ENCODE measurements at regions of chr14 and their contacts with region 1.

Region 1: GRCh38 chr14:100375963-100376735 is 53.0 kb downstream of the SLC25A47 start:
- DNase-seq: peak; percentile 97
- H3K4me3 ChIP-seq: peak within 1 kb of the TSS; percentile 63 to 77 (median 68)
- H3K27ac ChIP-seq: peak within 1 kb of the TSS; percentile 86 to 94 (median 90)
- H3K4me1 ChIP-seq: peaks cover 0 to 34% (median 25%) of the 10 kb centered on the region in 4 donors
- H3K27me3 ChIP-seq: no peaks in the 10 kb centered on the region
- CTCF ChIP-seq: no peak
- EP300 ChIP-seq: no peak
- POLR2A ChIP-seq: peak; percentile 52 to 60

Region 2: DNA sequence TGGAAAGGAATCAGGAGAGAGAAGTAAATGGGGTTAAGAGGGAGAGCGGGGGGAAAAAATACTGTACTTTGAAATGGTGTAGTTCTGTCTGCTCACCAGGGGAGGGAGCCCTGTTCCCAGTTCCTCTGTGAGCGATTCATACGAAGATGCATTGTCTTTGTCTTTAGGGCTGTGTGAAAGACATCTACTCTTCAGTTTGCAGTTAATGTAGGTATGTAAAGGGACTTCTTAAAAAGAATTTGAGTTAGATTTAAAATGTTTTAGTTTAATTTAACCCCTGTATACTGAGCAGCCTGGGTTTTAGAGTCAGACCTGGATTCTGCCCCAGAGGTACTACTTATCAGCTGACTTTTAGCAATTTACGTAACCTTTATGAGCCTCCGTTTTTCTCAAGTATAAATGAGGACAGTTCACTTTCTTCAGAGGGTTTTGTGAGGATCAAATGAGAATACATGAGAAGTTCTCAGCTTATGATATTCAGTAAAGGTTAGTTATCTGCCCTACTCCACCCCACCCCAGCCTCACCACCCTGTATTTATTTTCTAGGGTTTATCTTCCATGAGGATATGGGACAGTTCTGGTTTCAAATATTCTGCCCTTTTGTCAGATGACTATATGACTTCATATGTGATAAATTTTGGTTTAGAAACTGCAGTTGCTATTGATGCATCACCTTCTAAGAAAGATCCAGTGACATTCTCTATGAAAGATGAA is 393.5 kb before region 1 on chr14:
- intact Hi-C with region 1: loop called (anchors 10 kb)
- DNase-seq: no peak
- H3K4me3 ChIP-seq: no peak overlapping the region
- H3K27ac ChIP-seq: no peak overlapping the region
- H3K4me1 ChIP-seq: peaks cover 0 to 4% (median 0%) of the 10 kb centered on the region in 4 donors
- H3K27me3 ChIP-seq: no peaks in the 10 kb centered on the region
- CTCF ChIP-seq: peak; percentile 86 to 94 (median 90)
- EP300 ChIP-seq: no peak
- POLR2A ChIP-seq: no peak

Region 3: DNA sequence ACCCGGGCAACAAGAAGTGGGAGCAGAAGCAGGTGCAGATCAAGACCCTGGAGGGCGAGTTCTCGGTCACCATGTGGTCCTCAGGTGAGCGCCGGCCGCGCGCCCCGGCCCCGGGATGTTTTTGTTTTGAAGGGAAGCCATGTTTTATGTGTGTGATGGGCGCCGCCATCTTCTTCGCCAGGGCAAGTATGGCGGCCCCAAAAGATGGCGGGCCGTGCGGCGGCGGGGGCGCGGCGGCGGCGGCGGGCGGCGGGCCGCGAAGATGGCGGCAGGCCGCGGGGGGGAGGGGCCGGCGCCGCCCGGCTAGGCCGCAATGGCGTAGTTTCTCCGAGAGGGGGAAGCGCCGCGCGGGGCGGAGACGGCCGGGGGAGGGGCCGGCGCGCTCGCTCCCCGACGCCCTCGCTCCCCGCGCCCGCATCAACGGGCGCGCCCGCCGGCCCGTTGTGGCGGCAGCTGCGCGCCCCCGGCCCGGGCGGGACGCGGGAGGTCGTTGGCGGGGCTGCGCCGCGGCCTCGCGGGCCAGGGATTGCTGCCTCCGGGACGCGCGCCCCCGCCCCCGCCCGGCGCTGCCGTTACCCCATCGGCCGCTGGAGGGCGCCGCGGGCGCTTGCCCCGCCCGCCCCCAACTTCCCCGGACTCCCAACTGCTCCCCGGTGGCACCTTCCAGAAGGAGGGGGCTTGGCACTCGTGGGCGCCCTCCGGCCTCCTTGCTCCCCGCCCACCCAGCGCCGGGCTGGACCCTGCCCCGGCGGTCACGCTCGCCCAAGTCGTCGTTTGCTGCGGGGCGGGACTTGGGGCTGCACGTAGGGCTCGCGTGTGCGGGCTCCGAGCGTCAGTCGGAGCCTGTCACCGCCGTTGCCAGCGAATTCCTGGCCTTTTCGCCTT is 136.1 kb before region 1 on chr14:
- intact Hi-C with region 1: loop called (anchors 2 kb)
- DNase-seq: peak; percentile 96
- H3K4me3 ChIP-seq: peak overlapping the region; percentile 75 to 100 (median 98)
- H3K27ac ChIP-seq: peak overlapping the region; percentile 98 to 100 (median 98)
- H3K4me1 ChIP-seq: peaks cover 0 to 57% (median 55%) of the 10 kb centered on the region in 4 donors
- H3K27me3 ChIP-seq: no peaks in the 10 kb centered on the region
- CTCF ChIP-seq: peak; percentile 39 to 75 (median 44)
- EP300 ChIP-seq: peak in 2 of 4 donors; percentile 30 to 80
- POLR2A ChIP-seq: peak; percentile 11 to 26

Region 4: GRCh38 chr14:100285021-100285912 is 90.9 kb before region 1 on chr14:
- intact Hi-C with region 1: loop called (anchors 5 kb)
- DNase-seq: no peak
- H3K4me3 ChIP-seq: peak overlapping the region; percentile 71 to 85 (median 82)
- H3K27ac ChIP-seq: peak overlapping the region; percentile 90 to 92 (median 91)
- H3K4me1 ChIP-seq: peaks cover 3 to 20% (median 14%) of the 10 kb centered on the region in 4 donors
- H3K27me3 ChIP-seq: no peaks in the 10 kb centered on the region
- CTCF ChIP-seq: peak; percentile 76 to 94 (median 84)
- EP300 ChIP-seq: no peak
- POLR2A ChIP-seq: no peak

Region 5: GRCh38 chr14:100306420-100307219 is 69.5 kb before region 1 on chr14 and contains the start of gene SLC25A29:
- intact Hi-C with region 1: loop called (anchors 2 kb)
- DNase-seq: peak; percentile 94
- H3K4me3 ChIP-seq: peak within 1 kb of the TSS; percentile 65 to 98 (median 75)
- H3K27ac ChIP-seq: peak within 1 kb of the TSS; percentile 85 to 92 (median 90)
- H3K4me1 ChIP-seq: peaks cover 0 to 36% (median 29%) of the 10 kb centered on the region in 4 donors
- H3K27me3 ChIP-seq: no peaks in the 10 kb centered on the region
- CTCF ChIP-seq: no peak
- EP300 ChIP-seq: peak in 1 of 4 donors; percentile 27
- POLR2A ChIP-seq: peak; percentile 42 to 62
- total RNA-seq, gene SLC25A29: 18.5 to 40.4 (median 33.4) TPM

Region 6: GRCh38 chr14:100644383-100644782 is 268.2 kb after region 1 on chr14:
- intact Hi-C with region 1: no loop called
- DNase-seq: no peak
- H3K4me3 ChIP-seq: no peak overlapping the region
- H3K27ac ChIP-seq: no peak overlapping the region
- H3K4me1 ChIP-seq: no peaks in the 10 kb centered on the region
- H3K27me3 ChIP-seq: peaks cover 0 to 7% (median 0%) of the 10 kb centered on the region in 3 donors
- CTCF ChIP-seq: no peak
- EP300 ChIP-seq: no peak
- POLR2A ChIP-seq: no peak

Region 7: DNA sequence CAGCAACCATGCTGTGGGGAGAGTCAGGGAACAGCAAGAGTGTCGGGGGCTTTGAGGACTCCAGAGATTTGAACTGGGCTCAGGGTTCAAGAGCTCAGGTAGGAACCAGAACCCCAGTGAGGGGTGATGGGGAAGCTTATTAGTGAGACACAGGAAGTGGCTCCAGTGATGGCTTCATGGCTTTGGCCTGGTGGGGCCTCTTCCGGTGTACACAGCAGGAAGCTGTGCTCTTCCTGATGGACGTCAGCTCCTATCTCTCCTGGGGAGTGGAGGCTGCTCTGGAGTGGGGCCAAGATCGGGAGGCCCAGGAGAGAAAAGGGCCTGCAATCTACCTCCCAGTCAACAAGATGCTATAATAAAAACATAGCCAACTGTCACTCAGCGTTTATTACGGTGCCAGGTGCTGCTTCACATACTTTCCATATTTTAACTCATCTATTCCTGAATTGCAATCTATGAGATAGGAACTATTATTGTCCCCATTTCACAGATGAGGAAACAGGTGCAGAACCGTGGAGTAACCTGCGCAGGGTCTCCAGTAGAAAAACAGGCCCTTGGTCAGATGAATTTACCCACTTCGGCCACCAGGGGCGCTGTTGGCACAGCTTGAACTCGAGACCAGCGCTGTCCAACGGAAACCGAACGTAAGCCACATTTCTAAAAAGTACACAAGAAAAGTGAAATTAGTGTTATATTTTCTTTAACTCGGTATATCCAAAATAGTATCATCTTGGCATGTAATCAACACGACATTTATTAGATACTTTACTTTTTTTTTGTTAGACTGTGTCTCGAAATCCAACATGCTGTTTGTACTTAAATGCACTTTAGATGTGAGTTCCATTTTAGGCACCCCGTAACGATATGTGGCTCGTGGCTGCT is 287.0 kb after region 1 on chr14:
- intact Hi-C with region 1: loop called (anchors 5 kb)
- DNase-seq: peak; percentile 77
- H3K4me3 ChIP-seq: no peak overlapping the region
- H3K27ac ChIP-seq: no peak overlapping the region
- H3K4me1 ChIP-seq: peaks cover 0 to 21% (median 17%) of the 10 kb centered on the region in 4 donors
- H3K27me3 ChIP-seq: peaks cover 0 to 32% (median 13%) of the 10 kb centered on the region in 3 donors
- CTCF ChIP-seq: peak; percentile 62 to 90 (median 80)
- EP300 ChIP-seq: no peak
- POLR2A ChIP-seq: no peak

Region 8: GRCh38 chr14:101359221-101360053 is 983.3 kb after region 1 on chr14:
- intact Hi-C with region 1: loop called (anchors 10 kb)
- DNase-seq: peak; percentile 95
- H3K4me3 ChIP-seq: peak overlapping the region in 2 of 4 donors; percentile 12 to 13
- H3K27ac ChIP-seq: peak overlapping the region; percentile 74 to 93 (median 90)
- H3K4me1 ChIP-seq: peaks cover 6 to 71% (median 64%) of the 10 kb centered on the region in 4 donors
- H3K27me3 ChIP-seq: no peaks in the 10 kb centered on the region
- CTCF ChIP-seq: no peak
- EP300 ChIP-seq: no peak
- POLR2A ChIP-seq: no peak